Common myeloid progenitor, CD34-positive (primary cell): ENCODE measurements at regions of chr1 and their contacts with region 1.

Region 1: GRCh38 chr1:150515328-150516048 is at the start of gene FALEC:
- DNase-seq: peak; percentile 89 to 93 (median 93)
- H3K4me3 ChIP-seq: peak within 1 kb of the TSS; percentile 54 to 95 (median 80)
- H3K27ac ChIP-seq: peak within 1 kb of the TSS in 1 of 2 experiments; percentile 65
- H3K4me1 ChIP-seq: peaks cover 0 to 18% (median 17%) of the 10 kb centered on the region in 4 experiments
- H3K27me3 ChIP-seq: no peaks in the 10 kb centered on the region

Region 2: GRCh38 chr1:150529017-150529416 is 13.5 kb after region 1 on chr1:
- CTCF ChIA-PET with region 1: interaction called, 38 read pairs
- POLR2A ChIA-PET with region 1: no interaction called
- DNase-seq: no peak
- H3K4me3 ChIP-seq: no peak overlapping the region
- H3K27ac ChIP-seq: no peak overlapping the region
- H3K4me1 ChIP-seq: no peaks in the 10 kb centered on the region
- H3K27me3 ChIP-seq: no peaks in the 10 kb centered on the region

Region 3: GRCh38 chr1:150537732-150538684 is 22.5 kb after region 1 on chr1:
- CTCF ChIA-PET with region 1: interaction called, 38 read pairs
- POLR2A ChIA-PET with region 1: no interaction called
- DNase-seq: no peak
- H3K4me3 ChIP-seq: no peak overlapping the region
- H3K27ac ChIP-seq: no peak overlapping the region
- H3K4me1 ChIP-seq: peaks cover 0 to 8% (median 0%) of the 10 kb centered on the region in 4 experiments
- H3K27me3 ChIP-seq: no peaks in the 10 kb centered on the region